Dorsolateral prefrontal cortex (tissue), 120 donors: ENCODE measurements at regions of chr17 and their contacts with region 1.

Region 1: GRCh38 chr17:28967221-28968140 is 16.2 kb upstream of the PHF12 start:
- DNase-seq: peak in 1 of 10 donors; percentile 54
- H3K4me3 ChIP-seq: no peak overlapping the region
- H3K27ac ChIP-seq: peak overlapping the region in 16 of 59 donors; percentile 11 to 75 (median 37)
- H3K27me3 ChIP-seq: no peaks in the 10 kb centered on the region
- CTCF ChIP-seq: no peak

Region 2: GRCh38 chr17:29089601-29090044 is 122.1 kb after region 1 on chr17:
- intact Hi-C with region 1: loop called in 1 of 2 experiments (anchors 5 kb)
- DNase-seq: peak; percentile 58 to 90 (median 68)
- H3K4me3 ChIP-seq: peak overlapping the region in 2 of 59 donors; percentile 3 to 21
- H3K27ac ChIP-seq: peak overlapping the region in 58 of 59 donors; percentile 3 to 94 (median 78)
- H3K27me3 ChIP-seq: no peaks in the 10 kb centered on the region
- CTCF ChIP-seq: peak in 2 of 56 donors; percentile 9 to 12

Region 3: GRCh38 chr17:29111816-29112499 is 144.5 kb after region 1 on chr17:
- intact Hi-C with region 1: loop called (anchors 1 to 2 kb)
- DNase-seq: peak; percentile 62 to 84 (median 72)
- H3K4me3 ChIP-seq: no peak overlapping the region
- H3K27ac ChIP-seq: peak overlapping the region in 55 of 59 donors; percentile 10 to 84 (median 66)
- H3K27me3 ChIP-seq: no peaks in the 10 kb centered on the region
- CTCF ChIP-seq: peak; percentile 64 to 95 (median 88)

Region 4: DNA sequence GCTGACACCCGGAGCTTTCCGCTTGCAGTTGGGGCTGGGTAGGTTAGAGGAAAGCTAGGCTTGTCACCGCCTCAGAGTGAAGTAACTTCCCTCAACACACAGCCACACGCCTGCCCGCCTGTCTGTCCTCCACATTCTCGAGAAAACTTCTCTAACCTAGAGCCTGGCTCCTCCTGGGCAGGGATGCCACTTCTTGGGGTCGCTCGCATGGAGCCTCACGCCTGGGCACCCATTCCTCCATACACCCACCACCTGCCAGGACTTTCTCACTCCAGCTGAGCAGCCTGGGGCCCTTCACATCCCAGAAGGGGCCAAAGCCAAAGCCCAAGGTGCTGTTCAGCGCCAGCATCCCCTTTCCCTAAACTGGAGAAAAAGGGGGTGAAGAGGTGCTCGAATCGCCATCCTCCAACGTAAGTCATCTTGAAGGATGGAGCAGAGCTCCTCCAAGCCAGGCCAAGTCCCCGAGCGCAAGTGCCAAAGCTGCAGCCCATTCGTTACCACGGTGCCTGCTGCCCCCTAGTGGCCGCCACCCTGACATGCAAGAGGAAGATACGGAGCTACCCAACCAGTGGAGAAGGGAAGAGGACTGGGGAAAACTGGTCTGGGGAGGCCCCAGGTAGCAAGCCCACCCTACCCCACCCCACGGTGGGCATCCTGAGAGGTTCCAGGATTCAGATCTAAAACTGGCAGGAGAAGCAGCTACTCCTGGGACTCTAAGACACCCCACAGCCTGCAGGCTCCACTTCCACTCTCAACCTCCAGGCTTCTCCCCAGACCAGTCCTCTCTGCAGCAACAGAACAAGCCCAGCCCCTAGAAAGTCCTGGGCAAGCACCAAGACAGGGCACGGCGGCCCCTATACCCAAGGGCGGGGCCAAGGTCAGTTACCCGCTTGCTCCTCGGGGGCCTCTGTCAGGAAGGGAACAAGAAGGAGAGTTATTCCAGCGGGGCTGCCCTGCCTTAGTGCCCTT is 149.6 kb after region 1 on chr17:
- intact Hi-C with region 1: loop called (anchors 1 to 2 kb)
- DNase-seq: peak; percentile 78 to 88 (median 84)
- H3K4me3 ChIP-seq: peak overlapping the region in 2 of 59 donors; percentile 13 to 14
- H3K27ac ChIP-seq: peak overlapping the region in 52 of 59 donors; percentile 11 to 88 (median 71)
- H3K27me3 ChIP-seq: no peaks in the 10 kb centered on the region
- CTCF ChIP-seq: peak; percentile 75 to 99 (median 94)